Posterior vena cava (tissue), 2 donors: ENCODE measurements at regions of chr15 and their contacts with region 1.

Region 1: GRCh38 chr15:84929744-84930371 is 45.4 kb downstream of the SLC28A1 start:
- DNase-seq: peak; percentile 75

Region 2: DNA sequence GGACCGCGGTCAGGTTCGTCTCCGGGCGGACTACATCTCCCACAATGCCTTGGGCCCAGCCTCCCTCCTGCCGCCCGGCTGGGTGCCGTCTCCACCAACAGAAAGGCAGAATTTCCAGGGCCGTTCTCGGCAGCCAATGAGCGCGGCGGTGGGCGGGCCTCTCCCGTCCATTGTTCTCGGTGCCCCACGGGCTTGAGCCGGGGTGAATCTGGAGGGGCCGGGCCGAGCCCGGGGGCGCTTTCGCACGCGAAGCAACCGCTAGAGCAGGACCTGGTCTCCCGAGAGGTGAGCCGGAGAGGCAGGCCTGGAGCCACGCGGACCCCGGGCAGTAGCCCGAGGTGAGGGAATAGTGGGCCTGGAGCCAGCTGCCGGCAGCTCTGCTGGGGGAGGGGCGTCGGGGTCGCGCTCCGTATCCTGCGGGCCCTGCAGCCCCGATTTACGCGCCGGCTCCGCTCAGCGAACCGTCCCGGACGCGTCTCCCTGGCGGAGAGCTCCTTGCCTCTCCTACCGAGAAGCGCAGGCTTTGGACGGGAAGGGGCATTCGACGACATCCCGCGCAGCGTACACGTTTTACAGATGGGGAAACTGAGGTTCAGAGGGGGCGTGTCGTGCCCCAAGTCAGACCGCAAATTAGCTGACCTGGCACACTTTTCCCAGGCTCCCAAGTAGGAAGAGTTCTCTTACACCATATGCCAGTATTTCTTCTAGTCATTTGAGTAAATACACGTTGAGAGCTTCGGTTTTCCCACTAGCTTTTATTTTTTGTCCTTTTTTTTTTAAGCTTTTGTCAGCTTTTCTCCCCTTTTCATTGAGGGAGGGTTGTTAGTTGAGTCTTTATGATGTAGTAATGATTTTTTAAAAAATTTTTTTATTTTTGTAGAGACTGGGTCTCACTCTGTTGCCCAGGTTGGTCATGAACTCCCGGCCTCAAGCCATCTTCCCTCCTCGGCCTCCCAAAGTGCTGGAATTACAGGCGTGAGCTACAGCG is 328.7 kb before region 1 on chr15 and contains the start of gene ZSCAN2:
- intact Hi-C with region 1: loop called in 1 of 2 experiments (anchors 10 kb)
- DNase-seq: peak; percentile 98
- total RNA-seq, gene ZSCAN2: 3.0 to 4.7 TPM

Region 3: GRCh38 chr15:84658080-84658787 is 271.6 kb before region 1 on chr15 and contains the start of gene NMB:
- intact Hi-C with region 1: loop called in 1 of 2 experiments (anchors 10 kb)
- DNase-seq: peak; percentile 90
- total RNA-seq, gene NMB: 5.7 to 8.7 TPM

Region 4: DNA sequence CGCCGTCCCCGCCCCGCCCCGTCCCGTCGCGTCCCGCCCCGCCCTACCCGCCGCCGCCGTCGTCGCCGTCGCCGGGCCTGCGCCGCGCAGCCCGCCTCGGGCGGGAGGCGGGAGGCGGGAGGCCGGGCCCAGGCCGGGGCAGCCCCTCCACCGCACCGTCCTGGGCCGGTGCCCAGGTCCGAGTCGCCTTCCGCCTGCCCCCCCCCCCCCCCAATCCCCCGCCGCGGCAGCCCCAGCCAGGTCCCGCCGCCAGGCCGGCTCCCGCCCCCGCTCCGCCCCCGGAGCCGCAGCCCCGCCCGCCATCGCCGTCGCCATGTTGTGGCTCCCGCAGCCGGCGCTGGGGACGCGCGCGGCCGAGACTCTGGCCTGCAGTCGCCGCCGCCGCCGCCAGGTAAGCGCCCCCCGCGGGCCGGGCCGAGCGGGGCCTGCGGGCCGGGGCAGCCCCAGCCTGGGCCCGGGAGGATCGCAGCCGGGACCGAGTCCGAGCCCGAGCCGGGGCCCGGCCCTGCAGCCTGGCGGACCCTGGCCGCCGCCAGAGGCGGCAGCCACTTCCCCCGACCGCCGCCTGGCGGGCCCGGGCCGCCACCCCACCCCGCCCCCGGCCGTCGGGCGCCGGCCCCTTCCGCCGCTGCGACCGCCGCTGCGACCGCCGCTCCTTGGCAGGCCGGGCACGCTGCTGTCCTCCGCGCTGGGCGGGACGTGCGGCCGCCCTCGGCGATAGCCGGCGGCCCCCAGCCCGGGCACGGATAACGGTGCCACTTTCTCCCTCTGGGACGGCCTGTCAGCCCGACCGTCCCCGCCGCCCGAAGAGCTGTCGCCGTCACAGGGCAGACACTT is 181.4 kb before region 1 on chr15 and contains the start of gene ZNF592:
- intact Hi-C with region 1: loop called in 1 of 2 experiments (anchors 10 kb)
- DNase-seq: peak; percentile 94
- total RNA-seq, gene ZNF592: 21.3 to 21.8 TPM

Region 5: GRCh38 chr15:84863565-84864443 is 66.1 kb before region 1 on chr15:
- intact Hi-C with region 1: loop called (anchors 5 kb)
- DNase-seq: peak; percentile 64

Region 6: GRCh38 chr15:84883916-84884768 is 45.7 kb before region 1 on chr15 and contains the start of gene SLC28A1:
- intact Hi-C with region 1: no loop called
- DNase-seq: no peak
- total RNA-seq, gene SLC28A1: 0.24 TPM in 1 of 2 donors, not detected in the other

Region 7: GRCh38 chr15:84975871-84976351 is 46.1 kb after region 1 on chr15:
- intact Hi-C with region 1: loop called in 1 of 2 experiments (anchors 1 kb)
- DNase-seq: no peak

Region 8: DNA sequence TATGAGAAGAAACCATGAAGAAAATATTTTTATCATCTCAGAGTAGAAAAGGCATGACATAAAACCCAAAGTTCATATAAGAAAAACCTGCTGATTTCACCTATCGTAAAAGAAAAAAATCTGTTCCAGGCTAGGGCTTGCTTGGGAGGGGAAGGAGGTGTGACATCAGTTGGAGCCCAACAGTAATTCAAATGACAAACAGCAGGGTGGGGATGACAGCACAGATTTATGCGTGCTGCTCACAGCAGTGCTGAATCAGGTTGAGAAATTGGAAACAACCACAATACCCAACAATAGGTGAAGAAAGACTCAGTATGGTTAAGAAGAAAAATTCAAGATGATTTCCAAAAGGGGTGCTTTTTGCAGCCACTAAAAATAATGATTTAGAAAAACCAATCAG is 224.2 kb after region 1 on chr15:
- intact Hi-C with region 1: no loop called
- DNase-seq: no peak